Posterior vena cava (tissue), 2 donors: ENCODE measurements at regions of chr16 and their contacts with region 1.

Region 1: DNA sequence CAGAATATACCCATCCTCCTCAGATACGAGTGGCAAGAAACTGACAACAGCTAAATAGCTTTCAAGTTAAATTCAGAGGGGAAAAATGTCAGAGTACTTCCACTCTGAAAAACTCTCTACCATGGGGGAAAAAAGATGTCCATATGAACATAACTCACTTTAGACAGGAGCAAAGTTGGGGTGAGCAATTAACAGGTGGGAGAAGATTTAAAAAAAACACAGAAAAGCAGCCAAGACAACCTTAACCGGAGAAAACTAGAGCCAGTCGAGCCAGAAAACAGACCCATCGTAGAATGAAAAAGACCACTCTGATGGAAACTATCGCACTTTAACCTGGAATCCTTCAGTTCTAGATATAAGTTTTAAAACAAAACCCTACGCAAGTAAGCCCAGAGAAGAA is 833 bp downstream of the TERF2 start:
- DNase-seq: no peak

Region 2: GRCh38 chr16:69351309-69352027 is 33.5 kb before region 1 on chr16 and contains the start of gene TMED6:
- intact Hi-C with region 1: loop called in 1 of 2 experiments (anchors 1 kb)
- DNase-seq: peak; percentile 13
- total RNA-seq, gene TMED6: 0.51 to 0.57 TPM